A673 (cell line): ENCODE measurements at regions of chr6 and their contacts with region 1.

Region 1: GRCh38 chr6:132798869-132799538 is 567 bp upstream of the SLC18B1 start:
- DNase-seq: peak; percentile 71
- H3K4me3 ChIP-seq: peak overlapping the region; percentile 86
- H3K27ac ChIP-seq: peak overlapping the region; percentile 84
- H3K4me1 ChIP-seq: peaks cover 9% of the 10 kb centered on the region
- H3K27me3 ChIP-seq: no peaks in the 10 kb centered on the region
- CTCF ChIP-seq: peak; percentile 83

Region 2: GRCh38 chr6:132527791-132528190 is 271.2 kb before region 1 on chr6:
- CTCF ChIA-PET with region 1: no interaction called
- POLR2A ChIA-PET with region 1: no interaction called
- intact Hi-C with region 1: loop called (anchors 10 kb)
- DNase-seq: peak; percentile 69
- H3K4me3 ChIP-seq: no peak overlapping the region
- H3K27ac ChIP-seq: no peak overlapping the region
- H3K4me1 ChIP-seq: no peaks in the 10 kb centered on the region
- H3K27me3 ChIP-seq: peaks cover 7% of the 10 kb centered on the region
- CTCF ChIP-seq: no peak

Region 3: DNA sequence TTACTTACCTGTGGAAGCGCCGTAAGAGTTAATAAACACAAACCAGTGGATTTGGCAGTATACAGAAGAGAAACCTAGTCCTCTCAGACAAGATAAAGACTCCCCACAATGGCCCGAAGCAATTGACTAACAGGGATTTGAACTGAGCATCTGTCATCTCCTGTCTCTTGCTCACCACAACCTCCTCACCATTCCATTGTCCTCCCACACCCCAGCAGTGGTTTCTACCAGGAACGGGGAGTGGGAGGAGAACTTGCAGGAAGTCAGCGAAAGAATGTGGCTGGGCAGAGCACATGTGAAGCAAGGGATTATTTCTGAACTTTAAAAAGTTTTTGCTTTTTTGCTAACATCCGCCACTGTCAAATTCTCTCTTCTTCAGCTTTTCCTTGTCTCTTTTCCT is 115.5 kb before region 1 on chr6:
- CTCF ChIA-PET with region 1: interaction called, 10 read pairs
- POLR2A ChIA-PET with region 1: no interaction called
- intact Hi-C with region 1: no loop called
- DNase-seq: peak; percentile 3
- H3K4me3 ChIP-seq: no peak overlapping the region
- H3K27ac ChIP-seq: no peak overlapping the region
- H3K4me1 ChIP-seq: no peaks in the 10 kb centered on the region
- H3K27me3 ChIP-seq: peaks cover 32% of the 10 kb centered on the region
- CTCF ChIP-seq: no peak

Region 4: DNA sequence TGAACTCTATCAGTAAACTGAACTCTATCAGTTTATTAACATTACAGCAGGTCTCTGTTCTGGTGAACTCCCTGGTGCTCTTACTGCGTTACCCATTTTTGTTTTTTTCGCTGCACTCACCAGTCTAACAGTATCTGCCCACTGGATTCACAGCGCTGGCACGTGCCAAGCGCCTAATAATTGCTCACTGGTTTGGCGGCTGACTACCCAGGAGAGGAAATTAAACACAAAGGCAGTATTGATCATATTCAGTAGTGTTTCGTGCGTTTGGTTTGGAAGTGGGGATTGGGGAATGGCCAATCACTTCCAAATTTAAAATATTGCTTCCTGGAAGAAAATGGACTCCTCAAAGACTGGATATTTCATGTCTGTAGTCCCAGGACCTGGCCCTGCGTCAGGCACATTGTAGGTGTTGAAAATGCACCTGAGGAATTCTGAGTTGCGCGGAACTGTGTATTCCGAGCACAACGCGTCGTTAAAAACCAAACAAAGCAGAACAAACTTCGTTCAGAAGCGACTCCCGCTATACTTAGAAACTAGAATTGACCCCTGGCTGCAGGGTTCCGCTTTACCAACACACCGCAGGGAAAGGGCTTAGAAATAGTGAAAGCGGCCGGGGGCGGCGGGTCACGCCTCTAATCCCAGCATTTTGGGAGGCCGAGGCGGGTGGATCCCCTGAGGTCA is 14.3 kb after region 1 on chr6:
- CTCF ChIA-PET with region 1: interaction called, 5 read pairs
- POLR2A ChIA-PET with region 1: interaction called, 8 read pairs
- intact Hi-C with region 1: loop called (anchors 1 kb)
- DNase-seq: peak; percentile 62
- H3K4me3 ChIP-seq: peak overlapping the region; percentile 81
- H3K27ac ChIP-seq: peak overlapping the region; percentile 93
- H3K4me1 ChIP-seq: peaks cover 16% of the 10 kb centered on the region
- H3K27me3 ChIP-seq: no peaks in the 10 kb centered on the region
- CTCF ChIP-seq: no peak